ENCODE measurements at regions of chr7 and their contacts with region 1.

Region 1: DNA sequence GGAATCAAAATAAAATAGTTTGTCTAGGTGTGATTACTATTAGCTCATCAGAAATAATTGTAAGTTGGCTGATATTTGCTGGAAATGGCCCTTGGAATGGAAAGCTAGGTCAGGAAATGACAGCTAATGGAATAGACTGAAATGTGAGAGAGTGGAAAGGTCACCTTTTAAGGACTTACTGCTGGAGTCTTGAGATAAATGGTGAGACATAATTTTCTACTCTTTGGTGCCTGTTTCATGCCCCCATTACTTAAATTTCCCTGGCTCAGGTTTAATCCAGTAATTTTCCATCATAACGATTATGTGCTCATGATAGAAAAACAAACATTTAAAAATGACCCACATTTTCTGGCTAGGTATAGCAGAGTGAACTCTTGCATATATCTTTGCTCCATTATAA is 123.6 kb downstream of the ADAM22 start:
- DNase-seq: peak; percentile 50

Region 2: GRCh38 chr7:88020953-88021665 is 36.5 kb before region 1 on chr7:
- in situ Hi-C with region 1: no loop called
- DNase-seq: no peak

Region 3: GRCh38 chr7:88090671-88091070 is 33.0 kb after region 1 on chr7:
- in situ Hi-C with region 1: loop called (anchors 5 kb)
- DNase-seq: peak; percentile 66

Measured in G401 (cell line).